Sigmoid colon (tissue), 7 donors: ENCODE measurements at regions of chr21 and their contacts with region 1.

Region 1: DNA sequence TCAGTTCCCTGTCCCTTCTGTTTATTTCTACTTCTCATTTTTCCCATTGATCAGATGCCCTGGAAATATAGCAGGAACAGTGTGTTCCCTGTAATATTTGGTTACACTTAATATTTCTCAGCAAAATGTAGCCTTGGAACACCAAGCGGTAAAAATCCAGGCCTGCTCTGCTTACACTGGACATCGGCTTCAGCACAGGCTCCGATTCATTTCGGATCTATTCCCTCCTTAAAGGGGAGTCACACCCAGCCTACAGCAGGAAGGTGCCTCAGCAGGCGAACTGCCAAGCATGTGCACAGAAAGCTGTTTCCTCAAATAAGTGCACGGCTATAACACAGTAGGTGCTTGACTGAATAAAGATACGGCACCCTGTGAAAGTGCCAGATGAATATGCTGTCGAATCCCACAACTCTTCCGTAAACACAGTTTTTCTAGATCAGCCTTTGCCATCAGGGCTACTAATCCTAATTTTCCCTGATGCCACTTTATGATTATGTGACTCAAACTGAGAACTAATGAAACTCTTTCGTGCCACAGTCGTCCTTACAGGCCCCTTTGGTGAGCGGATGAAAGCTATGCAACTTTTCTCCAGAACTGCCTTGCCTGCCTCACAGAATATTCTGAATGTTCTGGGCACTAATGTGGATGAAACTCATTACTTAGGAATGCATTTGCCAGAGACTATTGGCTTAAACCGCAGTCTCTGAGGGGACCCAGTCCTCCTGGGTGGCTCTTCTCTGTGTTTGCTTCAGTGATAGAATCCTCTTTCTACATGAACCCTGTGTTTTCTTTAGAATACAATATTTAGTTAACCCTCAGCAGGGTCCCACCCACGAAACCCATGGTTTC is 275.5 kb upstream of the RUNX1 start:
- DNase-seq: peak; percentile 81
- H3K4me3 ChIP-seq: peak overlapping the region in 1 of 4 donors; percentile 0
- H3K27ac ChIP-seq: peak overlapping the region; percentile 56 to 91 (median 88)
- H3K4me1 ChIP-seq: peaks cover 0 to 49% (median 43%) of the 10 kb centered on the region in 4 donors
- H3K27me3 ChIP-seq: no peaks in the 10 kb centered on the region
- CTCF ChIP-seq: no peak
- EP300 ChIP-seq: peak in 2 of 4 donors; percentile 65 to 67
- POLR2A ChIP-seq: no peak

Region 2: GRCh38 chr21:35204850-35205541 is 119.6 kb before region 1 on chr21:
- intact Hi-C with region 1: loop called (anchors 2 kb)
- DNase-seq: peak; percentile 89
- H3K4me3 ChIP-seq: peak overlapping the region in 3 of 4 donors; percentile 23 to 25 (median 24)
- H3K27ac ChIP-seq: peak overlapping the region; percentile 31 to 82 (median 68)
- H3K4me1 ChIP-seq: peaks cover 0 to 52% (median 43%) of the 10 kb centered on the region in 4 donors
- H3K27me3 ChIP-seq: no peaks in the 10 kb centered on the region
- CTCF ChIP-seq: peak in 1 of 4 experiments; percentile 15
- EP300 ChIP-seq: peak in 1 of 4 donors; percentile 9
- POLR2A ChIP-seq: no peak

Region 3: GRCh38 chr21:35256467-35256988 is 68.1 kb before region 1 on chr21:
- intact Hi-C with region 1: loop called (anchors 5 kb)
- DNase-seq: peak; percentile 84
- H3K4me3 ChIP-seq: peak overlapping the region in 2 of 4 donors; percentile 14 to 24
- H3K27ac ChIP-seq: peak overlapping the region; percentile 1 to 72 (median 34)
- H3K4me1 ChIP-seq: peaks cover 0 to 19% (median 15%) of the 10 kb centered on the region in 4 donors
- H3K27me3 ChIP-seq: no peaks in the 10 kb centered on the region
- CTCF ChIP-seq: no peak
- EP300 ChIP-seq: no peak
- POLR2A ChIP-seq: no peak

Region 4: DNA sequence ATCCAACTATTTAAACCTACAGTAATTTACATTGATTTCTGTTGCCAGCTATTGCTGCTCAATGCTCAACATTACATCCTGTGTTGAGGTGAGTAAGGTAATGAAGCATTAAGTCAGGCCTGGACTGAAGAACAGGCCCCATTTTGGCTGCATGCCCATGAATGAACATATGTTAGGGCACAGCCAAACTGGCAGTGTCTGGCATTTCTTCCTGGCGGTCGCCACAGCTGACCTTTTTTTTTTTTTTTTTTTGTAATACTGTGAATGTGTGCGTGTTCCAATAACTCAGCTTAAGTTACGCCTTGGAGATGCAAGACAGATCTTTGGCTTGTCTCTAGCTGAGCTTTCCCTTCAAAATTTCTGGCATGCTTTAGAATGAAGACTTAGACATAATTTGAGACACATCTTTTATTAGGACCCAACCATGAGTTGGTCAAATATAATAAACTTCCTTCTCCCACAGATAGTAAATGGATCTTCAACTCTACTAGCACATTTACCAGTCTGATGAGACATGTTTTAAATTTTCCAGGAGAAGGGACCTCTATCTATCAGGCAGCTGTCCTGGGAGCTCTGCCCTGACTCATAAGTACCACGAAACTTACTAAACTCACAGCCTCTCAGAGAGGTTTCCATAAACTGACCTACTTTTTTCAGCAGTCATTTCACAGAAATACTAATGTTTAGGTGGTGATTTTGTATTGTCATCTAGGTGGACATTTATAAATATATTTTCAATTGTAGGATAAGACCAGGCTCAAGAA is 65.6 kb after region 1 on chr21:
- intact Hi-C with region 1: loop called (anchors 5 kb)
- DNase-seq: peak; percentile 73
- H3K4me3 ChIP-seq: no peak overlapping the region
- H3K27ac ChIP-seq: peak overlapping the region in 2 of 4 donors; percentile 53 to 54
- H3K4me1 ChIP-seq: peaks cover 0 to 8% (median 7%) of the 10 kb centered on the region in 4 donors
- H3K27me3 ChIP-seq: no peaks in the 10 kb centered on the region
- CTCF ChIP-seq: no peak
- EP300 ChIP-seq: no peak
- POLR2A ChIP-seq: no peak